Endothelial cell of umbilical vein (primary cell): ENCODE measurements at regions of chr4 and their contacts with region 1.

Region 1: GRCh38 chr4:61693520-61693919 is 493.4 kb downstream of the ADGRL3 start:
- DNase-seq: no peak
- H3K4me3 ChIP-seq: no peak overlapping the region
- H3K27ac ChIP-seq: no peak overlapping the region
- H3K4me1 ChIP-seq: no peaks in the 10 kb centered on the region
- H3K27me3 ChIP-seq: no peaks in the 10 kb centered on the region
- CTCF ChIP-seq: no peak
- POLR2A ChIP-seq: no peak

Region 2: GRCh38 chr4:62209757-62210485 is 516.4 kb after region 1 on chr4:
- CTCF ChIA-PET with region 1: no interaction called
- POLR2A ChIA-PET with region 1: no interaction called
- dilution Hi-C with region 1: no loop called
- intact Hi-C with region 1: loop called (anchors 5 kb)
- DNase-seq: no peak
- H3K4me3 ChIP-seq: no peak overlapping the region
- H3K27ac ChIP-seq: no peak overlapping the region
- H3K4me1 ChIP-seq: no peaks in the 10 kb centered on the region
- H3K27me3 ChIP-seq: no peaks in the 10 kb centered on the region
- CTCF ChIP-seq: no peak
- POLR2A ChIP-seq: no peak